GM12878 (cell line): ENCODE measurements at regions of chr14 and their contacts with region 1.

Region 1: DNA sequence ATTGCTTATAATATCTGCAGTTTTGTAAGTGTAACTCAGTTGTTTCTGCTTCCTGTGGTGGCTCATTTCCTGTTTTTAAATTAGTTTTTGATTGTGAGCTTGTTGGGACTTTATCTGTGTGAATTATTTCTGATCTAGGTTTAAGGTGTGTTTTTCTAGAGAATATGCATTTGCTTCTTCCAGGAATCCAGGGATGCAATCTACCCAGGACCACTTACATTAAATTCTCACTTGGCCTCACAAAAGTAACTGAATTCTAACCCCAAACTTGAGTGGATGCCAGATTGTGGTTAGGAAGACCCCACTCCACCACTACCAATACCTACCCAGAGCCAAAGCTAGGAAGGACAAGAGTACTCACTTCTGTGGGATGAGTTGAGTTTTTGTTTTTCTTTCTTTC is 11.9 kb downstream of the STYX start:
- DNase-seq: no peak
- ATAC-seq: peak; percentile 70
- H3K4me3 ChIP-seq: peak overlapping the region; percentile 12
- H3K27ac ChIP-seq: peak overlapping the region; percentile 87
- H3K4me1 ChIP-seq: peaks cover 9% of the 10 kb centered on the region
- H3K27me3 ChIP-seq: no peaks in the 10 kb centered on the region
- CTCF ChIP-seq: no peak
- EP300 ChIP-seq: no peak
- POLR2A ChIP-seq: no peak
- RAD21 ChIP-seq: no peak

Region 2: GRCh38 chr14:52724360-52724644 is 17.6 kb before region 1 on chr14:
- CTCF ChIA-PET with region 1: interaction called, 6 read pairs
- POLR2A ChIA-PET with region 1: interaction called, 30 read pairs
- RAD21 ChIA-PET with region 1: interaction called, 10 read pairs
- SMC1A ChIA-PET with region 1: interaction called, 13 read pairs
- in situ Hi-C with region 1: no loop called
- intact Hi-C with region 1: no loop called
- DNase-seq: no peak
- ATAC-seq: peak; percentile 51
- H3K4me3 ChIP-seq: no peak overlapping the region
- H3K27ac ChIP-seq: no peak overlapping the region
- H3K4me1 ChIP-seq: peaks cover 14% of the 10 kb centered on the region
- H3K27me3 ChIP-seq: no peaks in the 10 kb centered on the region
- CTCF ChIP-seq: no peak
- EP300 ChIP-seq: no peak
- POLR2A ChIP-seq: no peak
- RAD21 ChIP-seq: no peak

Region 3: DNA sequence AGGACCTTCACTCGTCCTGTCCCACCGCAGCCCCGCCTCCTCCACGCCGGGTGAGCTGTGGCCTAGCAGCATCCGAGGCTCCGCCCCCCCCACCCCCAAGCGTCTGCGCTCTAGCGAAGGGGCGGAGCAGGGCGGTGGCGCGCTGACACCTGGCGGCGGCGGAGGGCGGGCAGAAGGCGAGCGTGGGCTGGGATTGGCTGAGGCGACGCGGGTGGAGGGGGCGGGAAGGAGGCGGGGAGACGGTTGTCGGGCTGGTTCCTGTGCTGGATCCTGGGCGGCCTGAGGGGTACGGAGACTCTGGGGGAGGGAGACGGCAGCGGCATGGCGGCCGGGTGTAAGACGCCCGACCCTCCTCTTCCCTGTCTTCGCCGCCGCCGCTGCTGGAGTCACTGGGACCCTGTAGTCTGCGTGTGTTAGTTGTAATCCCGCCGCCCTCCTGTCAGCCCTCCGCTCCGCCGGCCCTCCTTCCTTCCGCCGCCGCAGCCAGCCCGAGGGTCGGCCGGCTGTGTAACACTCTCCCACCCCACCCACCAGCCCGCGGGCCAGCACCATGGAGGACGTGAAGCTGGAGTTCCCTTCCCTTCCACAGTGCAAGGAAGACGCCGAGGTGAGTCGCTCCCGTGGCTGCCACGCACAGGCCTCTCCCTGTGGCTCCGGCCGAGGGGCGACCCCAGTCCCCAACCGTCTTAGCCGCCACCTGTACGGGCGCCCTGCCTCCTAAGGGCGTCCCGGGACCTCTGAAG is 11.8 kb before region 1 on chr14 and contains the start of gene STYX:
- CTCF ChIA-PET with region 1: interaction called, 6 read pairs
- POLR2A ChIA-PET with region 1: interaction called, 30 read pairs
- RAD21 ChIA-PET with region 1: interaction called, 11 read pairs
- SMC1A ChIA-PET with region 1: interaction called, 13 read pairs
- in situ Hi-C with region 1: no loop called
- intact Hi-C with region 1: no loop called
- DNase-seq: peak; percentile 93
- ATAC-seq: peak; percentile 98
- H3K4me3 ChIP-seq: peak within 1 kb of the TSS; percentile 75
- H3K27ac ChIP-seq: peak within 1 kb of the TSS; percentile 71
- H3K4me1 ChIP-seq: no peaks in the 10 kb centered on the region
- H3K27me3 ChIP-seq: no peaks in the 10 kb centered on the region
- CTCF ChIP-seq: no peak
- EP300 ChIP-seq: no peak
- POLR2A ChIP-seq: peak; percentile 96
- RAD21 ChIP-seq: no peak
- polyA plus RNA-seq, gene STYX: 5.0 to 10.1 TPM

Region 4: GRCh38 chr14:52829527-52829926 is 87.7 kb after region 1 on chr14:
- CTCF ChIA-PET with region 1: no interaction called
- POLR2A ChIA-PET with region 1: no interaction called
- RAD21 ChIA-PET with region 1: no interaction called
- SMC1A ChIA-PET with region 1: no interaction called
- in situ Hi-C with region 1: no loop called
- intact Hi-C with region 1: no loop called
- DNase-seq: no peak
- ATAC-seq: no peak
- H3K4me3 ChIP-seq: no peak overlapping the region
- H3K27ac ChIP-seq: no peak overlapping the region
- H3K4me1 ChIP-seq: peaks cover 2% of the 10 kb centered on the region
- H3K27me3 ChIP-seq: no peaks in the 10 kb centered on the region
- CTCF ChIP-seq: no peak
- EP300 ChIP-seq: no peak
- POLR2A ChIP-seq: no peak
- RAD21 ChIP-seq: no peak